ENCODE measurements at regions of chr12 and their contacts with region 1.

Region 1: GRCh38 chr12:89542912-89543592 is 17.2 kb upstream of the POC1B start:
- DNase-seq: peak; percentile 32 to 81 (median 63)
- ATAC-seq: peak; percentile 83
- H3K4me3 ChIP-seq: no peak overlapping the region
- H3K4me3 Mint-ChIP-seq: no peak overlapping the region
- H3K27ac ChIP-seq: no peak overlapping the region
- H3K27ac Mint-ChIP-seq: no peak overlapping the region
- H3K4me1 ChIP-seq: no peaks in the 10 kb centered on the region
- H3K4me1 Mint-ChIP-seq: peaks cover 4% of the 10 kb centered on the region
- H3K27me3 ChIP-seq: no peaks in the 10 kb centered on the region
- H3K27me3 Mint-ChIP-seq: peaks cover 2% of the 10 kb centered on the region
- CTCF ChIP-seq: peak; percentile 90

Region 2: GRCh38 chr12:89559753-89560152 is 16.7 kb after region 1 on chr12:
- CTCF ChIA-PET with region 1: interaction called, 16 read pairs
- POLR2A ChIA-PET with region 1: no interaction called
- intact Hi-C with region 1: no loop called
- DNase-seq: no peak
- ATAC-seq: no peak
- H3K4me3 ChIP-seq: no peak overlapping the region
- H3K4me3 Mint-ChIP-seq: no peak overlapping the region
- H3K27ac ChIP-seq: no peak overlapping the region
- H3K27ac Mint-ChIP-seq: peak overlapping the region; percentile 8
- H3K4me1 ChIP-seq: no peaks in the 10 kb centered on the region
- H3K4me1 Mint-ChIP-seq: no peaks in the 10 kb centered on the region
- H3K27me3 ChIP-seq: no peaks in the 10 kb centered on the region
- H3K27me3 Mint-ChIP-seq: no peaks in the 10 kb centered on the region
- CTCF ChIP-seq: no peak

Region 3: DNA sequence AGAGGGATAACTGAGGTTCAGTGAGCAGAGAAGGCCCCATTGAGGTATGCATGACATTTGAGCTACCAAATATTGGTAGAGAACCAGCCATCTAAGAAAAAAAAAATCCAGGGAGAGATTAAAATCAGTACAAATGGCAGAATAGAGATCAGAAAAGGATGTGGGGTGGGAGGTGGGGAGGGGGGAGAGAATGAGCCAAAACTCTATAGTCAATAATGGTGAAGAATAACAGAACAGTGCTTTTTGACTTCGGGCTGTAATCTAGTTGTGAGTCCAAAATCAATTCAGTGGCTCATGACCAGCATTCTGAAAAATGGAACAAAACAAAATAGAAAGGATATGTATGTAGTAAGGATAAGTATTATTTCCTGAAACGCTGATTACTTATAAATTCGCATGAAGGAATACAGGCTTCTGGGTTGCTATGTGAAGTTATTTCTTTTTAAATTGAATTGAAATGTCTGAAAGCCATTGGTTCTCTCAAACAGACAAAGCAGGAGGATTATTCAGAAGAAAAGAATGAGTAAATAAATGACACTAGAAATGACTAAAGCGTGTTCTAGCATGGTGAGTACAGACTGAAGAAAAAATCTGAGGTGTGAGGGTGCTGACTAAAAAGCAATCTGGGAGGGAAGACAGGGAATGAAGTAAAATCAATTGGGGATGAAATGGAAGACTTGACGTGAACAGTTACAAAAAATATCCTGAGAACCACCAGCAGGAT is 93.2 kb after region 1 on chr12:
- CTCF ChIA-PET with region 1: no interaction called
- POLR2A ChIA-PET with region 1: no interaction called
- intact Hi-C with region 1: no loop called
- DNase-seq: no peak
- ATAC-seq: no peak
- H3K4me3 ChIP-seq: no peak overlapping the region
- H3K4me3 Mint-ChIP-seq: no peak overlapping the region
- H3K27ac ChIP-seq: no peak overlapping the region
- H3K27ac Mint-ChIP-seq: peak overlapping the region; percentile 55
- H3K4me1 ChIP-seq: no peaks in the 10 kb centered on the region
- H3K4me1 Mint-ChIP-seq: peaks cover 21% of the 10 kb centered on the region
- H3K27me3 ChIP-seq: no peaks in the 10 kb centered on the region
- H3K27me3 Mint-ChIP-seq: no peaks in the 10 kb centered on the region
- CTCF ChIP-seq: no peak

Region 4: GRCh38 chr12:89949457-89950195 is 406.6 kb after region 1 on chr12:
- CTCF ChIA-PET with region 1: interaction called, 11 read pairs
- POLR2A ChIA-PET with region 1: no interaction called
- intact Hi-C with region 1: loop called in 1 of 2 experiments (anchors 5 kb)
- DNase-seq: peak in 8 of 9 experiments; percentile 23 to 95 (median 55)
- ATAC-seq: peak; percentile 90
- H3K4me3 ChIP-seq: no peak overlapping the region
- H3K4me3 Mint-ChIP-seq: peak overlapping the region; percentile 53
- H3K27ac ChIP-seq: peak overlapping the region; percentile 25 to 53
- H3K27ac Mint-ChIP-seq: peak overlapping the region; percentile 75
- H3K4me1 ChIP-seq: peaks cover 36% of the 10 kb centered on the region
- H3K4me1 Mint-ChIP-seq: peaks cover 47% of the 10 kb centered on the region
- H3K27me3 ChIP-seq: no peaks in the 10 kb centered on the region
- H3K27me3 Mint-ChIP-seq: no peaks in the 10 kb centered on the region
- CTCF ChIP-seq: peak; percentile 45

Region 5: DNA sequence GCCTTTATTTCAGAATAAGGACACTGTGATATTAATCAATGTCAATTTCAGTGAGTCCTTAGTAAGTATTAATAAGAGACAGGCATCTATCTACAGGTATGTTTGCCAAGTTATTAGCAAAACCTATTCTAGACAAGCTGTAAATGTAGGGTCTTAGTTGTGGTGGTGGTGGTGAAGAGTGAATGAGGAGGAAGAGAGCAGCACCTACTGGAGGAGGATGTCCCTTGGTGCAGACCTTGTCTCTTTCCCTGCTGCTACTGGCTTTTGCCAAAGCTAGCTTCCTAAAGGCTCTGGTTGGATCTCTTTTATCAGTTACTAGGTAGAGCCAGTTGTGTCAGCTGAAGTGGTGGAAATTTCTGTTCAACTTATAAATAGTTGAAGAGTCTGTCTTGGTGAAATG is 470.4 kb after region 1 on chr12:
- CTCF ChIA-PET with region 1: interaction called, 28 read pairs
- POLR2A ChIA-PET with region 1: interaction called, 3 read pairs
- intact Hi-C with region 1: loop called (anchors 1 to 2 kb)
- DNase-seq: peak in 2 of 9 experiments; percentile 46 to 64
- ATAC-seq: no peak
- H3K4me3 ChIP-seq: no peak overlapping the region
- H3K4me3 Mint-ChIP-seq: no peak overlapping the region
- H3K27ac ChIP-seq: no peak overlapping the region
- H3K27ac Mint-ChIP-seq: no peak overlapping the region
- H3K4me1 ChIP-seq: no peaks in the 10 kb centered on the region
- H3K4me1 Mint-ChIP-seq: peaks cover 3% of the 10 kb centered on the region
- H3K27me3 ChIP-seq: no peaks in the 10 kb centered on the region
- H3K27me3 Mint-ChIP-seq: no peaks in the 10 kb centered on the region
- CTCF ChIP-seq: peak; percentile 15

Region 6: GRCh38 chr12:90253674-90254181 is 710.7 kb after region 1 on chr12:
- CTCF ChIA-PET with region 1: no interaction called
- POLR2A ChIA-PET with region 1: no interaction called
- intact Hi-C with region 1: loop called in 1 of 2 experiments (anchors 10 kb)
- DNase-seq: peak in 8 of 9 experiments; percentile 5 to 62 (median 32)
- ATAC-seq: peak; percentile 34
- H3K4me3 ChIP-seq: no peak overlapping the region
- H3K4me3 Mint-ChIP-seq: no peak overlapping the region
- H3K27ac ChIP-seq: no peak overlapping the region
- H3K27ac Mint-ChIP-seq: no peak overlapping the region
- H3K4me1 ChIP-seq: peaks cover 8% of the 10 kb centered on the region
- H3K4me1 Mint-ChIP-seq: peaks cover 10% of the 10 kb centered on the region
- H3K27me3 ChIP-seq: no peaks in the 10 kb centered on the region
- H3K27me3 Mint-ChIP-seq: no peaks in the 10 kb centered on the region
- CTCF ChIP-seq: no peak

Region 7: GRCh38 chr12:90854136-90854689 is 1311.2 kb after region 1 on chr12:
- CTCF ChIA-PET with region 1: no interaction called
- POLR2A ChIA-PET with region 1: no interaction called
- intact Hi-C with region 1: loop called in 1 of 2 experiments (anchors 2 kb)
- DNase-seq: peak in 2 of 9 experiments; percentile 11 to 22
- ATAC-seq: no peak
- H3K4me3 ChIP-seq: no peak overlapping the region
- H3K4me3 Mint-ChIP-seq: no peak overlapping the region
- H3K27ac ChIP-seq: no peak overlapping the region
- H3K27ac Mint-ChIP-seq: no peak overlapping the region
- H3K4me1 ChIP-seq: no peaks in the 10 kb centered on the region
- H3K4me1 Mint-ChIP-seq: no peaks in the 10 kb centered on the region
- H3K27me3 ChIP-seq: peaks cover 0 to 2% of the 10 kb centered on the region in 2 experiments
- H3K27me3 Mint-ChIP-seq: no peaks in the 10 kb centered on the region
- CTCF ChIP-seq: peak; percentile 62

Region 8: DNA sequence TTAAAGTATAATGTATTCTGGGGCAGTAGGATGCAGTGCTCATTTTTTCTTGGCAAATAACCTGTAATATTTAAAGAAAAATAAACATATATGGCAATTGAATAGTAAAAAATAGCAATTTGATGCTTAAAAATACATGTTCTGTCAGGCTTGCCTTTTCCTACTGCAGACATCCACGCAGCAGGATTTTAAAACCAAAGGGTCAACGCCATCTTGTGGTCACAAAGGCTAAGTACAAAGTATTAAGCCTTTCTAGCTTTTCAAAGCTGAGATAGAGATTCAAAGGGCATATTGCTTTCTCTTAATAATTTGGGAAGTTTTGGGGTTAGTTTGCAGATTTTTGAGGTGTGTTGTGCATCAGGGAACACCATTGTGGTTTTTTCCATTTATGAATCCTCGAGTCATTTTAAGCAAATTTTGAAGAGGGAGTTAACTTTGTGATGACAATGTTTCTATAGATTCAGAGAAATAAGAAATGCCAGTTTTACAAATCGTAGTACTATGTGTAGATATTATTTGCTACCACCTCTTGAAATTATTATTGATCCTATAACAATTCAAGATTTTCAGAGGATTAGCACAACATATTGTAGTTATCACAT is 1416.6 kb after region 1 on chr12:
- CTCF ChIA-PET with region 1: no interaction called
- POLR2A ChIA-PET with region 1: no interaction called
- intact Hi-C with region 1: loop called in 1 of 2 experiments (anchors 1 kb)
- DNase-seq: peak in 3 of 9 experiments; percentile 9 to 49 (median 37)
- ATAC-seq: no peak
- H3K4me3 ChIP-seq: no peak overlapping the region
- H3K4me3 Mint-ChIP-seq: no peak overlapping the region
- H3K27ac ChIP-seq: no peak overlapping the region
- H3K27ac Mint-ChIP-seq: no peak overlapping the region
- H3K4me1 ChIP-seq: no peaks in the 10 kb centered on the region
- H3K4me1 Mint-ChIP-seq: no peaks in the 10 kb centered on the region
- H3K27me3 ChIP-seq: no peaks in the 10 kb centered on the region
- H3K27me3 Mint-ChIP-seq: peaks cover 2% of the 10 kb centered on the region
- CTCF ChIP-seq: peak; percentile 70